Caco-2 (cell line): ENCODE measurements at regions of chr11 and their contacts with region 1.

Region 1: DNA sequence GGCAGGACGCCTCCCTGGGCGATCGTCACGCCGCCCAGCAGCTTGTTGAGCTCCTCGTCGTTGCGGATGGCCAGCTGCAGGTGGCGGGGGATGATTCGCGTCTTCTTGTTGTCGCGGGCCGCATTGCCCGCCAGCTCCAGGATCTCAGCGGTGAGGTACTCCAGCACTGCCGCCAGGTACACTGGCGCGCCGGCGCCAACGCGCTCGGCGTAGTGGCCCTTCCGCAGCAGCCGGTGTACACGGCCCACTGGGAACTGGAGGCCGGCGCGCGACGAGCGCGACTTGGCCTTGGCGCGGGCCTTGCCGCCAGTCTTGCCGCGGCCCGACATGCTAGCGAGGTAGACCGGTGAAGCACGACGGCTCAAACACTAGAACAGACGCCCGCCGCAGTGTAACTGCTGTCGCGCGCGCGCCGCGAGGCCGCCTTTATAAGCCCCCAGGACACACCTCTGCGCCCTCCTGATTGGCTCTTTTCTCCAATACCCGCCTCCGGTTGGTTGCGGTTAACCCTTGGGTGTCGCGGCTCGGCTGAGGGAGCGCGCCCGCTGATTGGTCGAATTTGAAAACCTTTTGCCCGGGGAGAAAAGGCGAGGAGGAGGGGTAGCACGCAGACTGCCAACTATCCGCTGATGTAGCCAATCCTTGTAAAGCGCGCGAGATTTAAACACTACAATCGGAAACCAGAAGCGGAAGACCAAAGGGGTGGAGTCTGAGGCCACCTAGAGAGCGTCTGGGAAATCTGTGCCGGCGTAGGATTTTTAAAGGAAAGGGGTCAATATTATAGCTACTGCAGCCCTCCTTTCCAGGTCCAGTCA is 6.4 kb downstream of the DPAGT1 start:
- DNase-seq: peak; percentile 100
- H3K4me3 ChIP-seq: peak overlapping the region; percentile 95
- H3K4me3 Mint-ChIP-seq: peak overlapping the region; percentile 92
- H3K27ac Mint-ChIP-seq: peak overlapping the region; percentile 98
- H3K4me1 ChIP-seq: peaks cover 18% of the 10 kb centered on the region
- H3K4me1 Mint-ChIP-seq: peaks cover 19% of the 10 kb centered on the region
- H3K27me3 ChIP-seq: no peaks in the 10 kb centered on the region
- H3K27me3 Mint-ChIP-seq: no peaks in the 10 kb centered on the region
- CTCF ChIP-seq: peak; percentile 14 to 32

Region 2: DNA sequence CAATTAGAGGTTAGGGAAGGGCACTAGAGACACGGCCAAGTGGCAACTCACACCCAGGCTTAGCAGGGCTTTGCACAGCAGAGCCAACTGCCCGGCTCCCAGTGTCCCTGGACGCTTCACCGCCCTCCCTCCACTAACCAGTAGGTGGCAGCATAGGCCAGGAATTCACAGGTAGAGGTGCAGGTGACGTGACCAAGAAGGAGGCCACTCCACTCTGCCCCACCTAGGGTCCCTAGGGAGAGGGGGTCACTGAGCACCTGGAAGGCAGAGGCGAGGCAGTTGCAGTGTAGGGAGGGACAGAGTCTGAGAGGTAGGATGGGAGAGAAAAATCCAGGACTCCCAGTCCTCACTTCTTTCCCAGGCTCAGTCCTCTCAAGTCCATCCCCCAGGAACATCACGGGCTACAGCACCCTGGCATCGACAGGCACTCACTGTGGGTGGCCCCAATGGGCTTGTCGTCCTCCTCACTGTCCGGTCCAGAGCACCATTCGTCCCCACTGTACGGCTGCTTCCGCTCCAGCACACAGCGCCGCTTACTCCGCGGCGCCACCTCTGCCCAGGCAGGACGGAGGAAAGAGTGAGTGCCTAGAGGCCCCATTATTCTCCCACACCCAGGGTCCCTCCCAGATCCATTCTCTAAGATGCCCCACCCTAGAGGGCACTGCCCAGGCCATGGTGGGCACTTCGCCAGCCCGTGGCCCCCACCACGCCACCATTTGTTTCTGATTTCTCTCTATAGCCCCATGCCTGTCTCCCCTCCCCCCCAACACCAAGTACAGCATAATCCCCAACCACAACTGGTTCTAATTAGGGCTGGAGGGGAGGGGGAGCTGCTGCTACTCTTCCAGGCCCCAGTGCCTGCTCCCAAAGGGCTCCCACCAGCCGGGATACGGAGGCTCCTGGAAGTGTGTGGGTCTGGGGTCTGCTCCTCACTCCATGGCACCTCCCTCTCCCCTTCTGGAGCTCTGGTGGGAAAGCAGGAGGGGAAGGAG is 187.9 kb before region 1 on chr11:
- CTCF ChIA-PET with region 1: no interaction called
- POLR2A ChIA-PET with region 1: no interaction called
- intact Hi-C with region 1: loop called (anchors 2 kb)
- DNase-seq: peak; percentile 94 to 98
- H3K4me3 ChIP-seq: no peak overlapping the region
- H3K4me3 Mint-ChIP-seq: peak overlapping the region; percentile 45
- H3K27ac Mint-ChIP-seq: peak overlapping the region; percentile 96
- H3K4me1 ChIP-seq: peaks cover 45% of the 10 kb centered on the region
- H3K4me1 Mint-ChIP-seq: peaks cover 35% of the 10 kb centered on the region
- H3K27me3 ChIP-seq: no peaks in the 10 kb centered on the region
- H3K27me3 Mint-ChIP-seq: no peaks in the 10 kb centered on the region
- CTCF ChIP-seq: peak; percentile 96 to 99

Region 3: DNA sequence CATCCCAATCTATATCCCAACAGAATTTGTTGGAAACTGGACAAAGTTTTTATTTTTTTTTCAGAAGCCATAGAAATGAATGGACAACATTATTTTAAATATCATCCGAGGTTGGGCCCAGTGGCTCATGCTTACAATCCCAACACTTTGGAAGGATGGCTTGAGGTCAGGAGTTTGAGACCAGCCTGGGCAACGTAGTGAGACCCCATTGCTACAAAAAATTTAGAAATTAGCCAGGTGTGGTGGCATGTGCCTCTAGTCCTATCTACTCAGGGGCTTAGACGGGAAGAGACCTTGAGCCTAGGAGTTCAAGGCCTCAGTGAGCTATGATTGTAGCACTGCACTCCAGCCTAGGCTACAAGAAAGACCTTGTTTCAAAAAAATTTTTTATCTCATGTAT is 60.5 kb before region 1 on chr11:
- CTCF ChIA-PET with region 1: no interaction called
- POLR2A ChIA-PET with region 1: no interaction called
- intact Hi-C with region 1: no loop called
- DNase-seq: no peak
- H3K4me3 ChIP-seq: no peak overlapping the region
- H3K4me3 Mint-ChIP-seq: no peak overlapping the region
- H3K27ac Mint-ChIP-seq: no peak overlapping the region
- H3K4me1 ChIP-seq: no peaks in the 10 kb centered on the region; the same call in 1 of the 2 replicates
- H3K4me1 Mint-ChIP-seq: peaks cover 10% of the 10 kb centered on the region
- H3K27me3 ChIP-seq: no peaks in the 10 kb centered on the region
- H3K27me3 Mint-ChIP-seq: no peaks in the 10 kb centered on the region
- CTCF ChIP-seq: no peak

Region 4: GRCh38 chr11:119057000-119057769 is 38.1 kb before region 1 on chr11 and contains the start of gene HYOU1:
- CTCF ChIA-PET with region 1: interaction called, 3 read pairs
- POLR2A ChIA-PET with region 1: interaction called, 3 read pairs
- intact Hi-C with region 1: loop called (anchors 1 kb)
- DNase-seq: peak; percentile 100
- H3K4me3 ChIP-seq: peak within 1 kb of the TSS; percentile 94
- H3K4me3 Mint-ChIP-seq: peak within 1 kb of the TSS; percentile 88
- H3K27ac Mint-ChIP-seq: peak within 1 kb of the TSS; percentile 98
- H3K4me1 ChIP-seq: peaks cover 10% of the 10 kb centered on the region
- H3K4me1 Mint-ChIP-seq: peaks cover 20% of the 10 kb centered on the region
- H3K27me3 ChIP-seq: no peaks in the 10 kb centered on the region
- H3K27me3 Mint-ChIP-seq: no peaks in the 10 kb centered on the region
- CTCF ChIP-seq: peak; percentile 32 to 77
- total RNA-seq, gene HYOU1: 306 and 366 TPM in 2 replicates

Region 5: GRCh38 chr11:119084663-119085436 is 10.4 kb before region 1 on chr11 and contains the start of gene HMBS:
- CTCF ChIA-PET with region 1: interaction called, 10 read pairs
- POLR2A ChIA-PET with region 1: interaction called, 47 read pairs
- intact Hi-C with region 1: loop called (anchors 1 kb)
- DNase-seq: peak; percentile 97 to 98
- H3K4me3 ChIP-seq: peak within 1 kb of the TSS; percentile 85
- H3K4me3 Mint-ChIP-seq: peak within 1 kb of the TSS; percentile 97
- H3K27ac Mint-ChIP-seq: peak within 1 kb of the TSS; percentile 98
- H3K4me1 ChIP-seq: peaks cover 11% of the 10 kb centered on the region
- H3K4me1 Mint-ChIP-seq: peaks cover 1% of the 10 kb centered on the region
- H3K27me3 ChIP-seq: no peaks in the 10 kb centered on the region
- H3K27me3 Mint-ChIP-seq: no peaks in the 10 kb centered on the region
- CTCF ChIP-seq: no peak
- total RNA-seq, gene HMBS: 94.9 and 95.7 TPM in 2 replicates

Region 6: GRCh38 chr11:119144825-119145486 is 49.7 kb after region 1 on chr11:
- CTCF ChIA-PET with region 1: no interaction called
- POLR2A ChIA-PET with region 1: no interaction called
- intact Hi-C with region 1: no loop called
- DNase-seq: peak; percentile 87 to 93
- H3K4me3 ChIP-seq: no peak overlapping the region
- H3K4me3 Mint-ChIP-seq: no peak overlapping the region
- H3K27ac Mint-ChIP-seq: no peak overlapping the region
- H3K4me1 ChIP-seq: peaks cover 5% of the 10 kb centered on the region; the same call in 1 of the 2 replicates
- H3K4me1 Mint-ChIP-seq: no peaks in the 10 kb centered on the region
- H3K27me3 ChIP-seq: no peaks in the 10 kb centered on the region; the same call in 1 of the 2 replicates
- H3K27me3 Mint-ChIP-seq: peaks cover 10% of the 10 kb centered on the region
- CTCF ChIP-seq: peak; percentile 92 to 95

Region 7: GRCh38 chr11:119196833-119197483 is 101.7 kb after region 1 on chr11:
- CTCF ChIA-PET with region 1: interaction called, 4 read pairs
- POLR2A ChIA-PET with region 1: interaction called, 3 read pairs
- intact Hi-C with region 1: loop called (anchors 2 kb)
- DNase-seq: peak; percentile 86 to 92
- H3K4me3 ChIP-seq: no peak overlapping the region
- H3K4me3 Mint-ChIP-seq: no peak overlapping the region
- H3K27ac Mint-ChIP-seq: peak overlapping the region; percentile 15
- H3K4me1 ChIP-seq: peaks cover 10% of the 10 kb centered on the region
- H3K4me1 Mint-ChIP-seq: peaks cover 10% of the 10 kb centered on the region
- H3K27me3 ChIP-seq: no peaks in the 10 kb centered on the region
- H3K27me3 Mint-ChIP-seq: peaks cover 2% of the 10 kb centered on the region
- CTCF ChIP-seq: peak; percentile 93 to 96